PC-3 (cell line): ENCODE measurements at regions of chr10 and their contacts with region 1.

Region 1: DNA sequence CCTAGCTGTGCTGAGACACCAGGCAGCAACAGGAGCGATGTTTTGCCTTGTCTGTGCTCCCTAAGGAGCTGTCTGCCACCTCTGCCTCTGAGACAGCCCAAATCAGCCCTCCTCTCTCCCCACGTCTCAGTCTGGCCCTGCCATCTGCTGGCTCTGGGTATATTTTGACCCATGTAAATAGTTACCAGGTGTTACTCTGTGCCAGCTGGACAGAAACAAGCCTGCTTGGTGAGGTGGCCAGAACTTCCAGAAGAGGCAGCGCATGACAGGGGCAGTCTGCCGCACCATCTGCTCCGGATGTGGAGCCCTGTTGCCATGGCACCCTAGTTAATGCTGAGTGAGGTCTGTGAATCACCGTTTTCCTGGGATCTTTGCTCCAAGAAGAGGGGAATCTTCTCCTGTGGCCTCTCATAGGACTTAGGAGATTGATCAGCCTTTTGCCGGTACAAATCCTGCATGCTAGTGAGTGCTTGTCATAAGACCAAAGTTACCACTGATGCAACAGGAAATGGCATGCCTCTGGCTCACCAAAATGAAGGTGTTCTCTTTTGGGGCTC is 31.8 kb downstream of the GSTO2 start:
- DNase-seq: peak; percentile 79
- ATAC-seq: peak; percentile 82
- H3K4me3 ChIP-seq: no peak overlapping the region
- H3K27ac ChIP-seq: peak overlapping the region; percentile 94
- H3K4me1 ChIP-seq: peaks cover 29% of the 10 kb centered on the region
- H3K27me3 ChIP-seq: no peaks in the 10 kb centered on the region
- CTCF ChIP-seq: peak; percentile 41; the same call in 1 of the 2 replicates

Region 2: DNA sequence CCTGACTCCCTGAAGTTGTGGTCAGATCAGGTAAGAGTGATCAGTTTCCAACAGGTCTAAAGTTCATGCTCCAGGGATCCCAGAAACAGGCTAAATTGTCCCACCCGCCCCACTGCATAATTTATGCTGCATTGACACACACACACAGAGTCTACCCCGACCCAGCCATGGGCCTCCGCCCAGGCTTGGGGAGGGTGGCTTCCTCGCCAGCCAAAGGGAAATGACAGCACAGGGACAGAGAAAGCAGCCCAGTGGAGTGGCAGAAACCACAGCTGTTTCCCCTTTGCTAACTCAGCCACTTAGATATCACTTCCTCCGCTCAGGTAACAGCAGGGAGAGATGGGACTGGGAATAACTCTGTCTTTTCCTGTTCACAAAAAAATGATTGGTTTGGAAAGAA is 454.8 kb before region 1 on chr10:
- CTCF ChIA-PET with region 1: no interaction called
- POLR2A ChIA-PET with region 1: no interaction called
- intact Hi-C with region 1: no loop called
- DNase-seq: no peak
- ATAC-seq: no peak
- H3K4me3 ChIP-seq: no peak overlapping the region
- H3K27ac ChIP-seq: no peak overlapping the region
- H3K4me1 ChIP-seq: peaks cover 24% of the 10 kb centered on the region
- H3K27me3 ChIP-seq: no peaks in the 10 kb centered on the region
- CTCF ChIP-seq: no peak

Region 3: DNA sequence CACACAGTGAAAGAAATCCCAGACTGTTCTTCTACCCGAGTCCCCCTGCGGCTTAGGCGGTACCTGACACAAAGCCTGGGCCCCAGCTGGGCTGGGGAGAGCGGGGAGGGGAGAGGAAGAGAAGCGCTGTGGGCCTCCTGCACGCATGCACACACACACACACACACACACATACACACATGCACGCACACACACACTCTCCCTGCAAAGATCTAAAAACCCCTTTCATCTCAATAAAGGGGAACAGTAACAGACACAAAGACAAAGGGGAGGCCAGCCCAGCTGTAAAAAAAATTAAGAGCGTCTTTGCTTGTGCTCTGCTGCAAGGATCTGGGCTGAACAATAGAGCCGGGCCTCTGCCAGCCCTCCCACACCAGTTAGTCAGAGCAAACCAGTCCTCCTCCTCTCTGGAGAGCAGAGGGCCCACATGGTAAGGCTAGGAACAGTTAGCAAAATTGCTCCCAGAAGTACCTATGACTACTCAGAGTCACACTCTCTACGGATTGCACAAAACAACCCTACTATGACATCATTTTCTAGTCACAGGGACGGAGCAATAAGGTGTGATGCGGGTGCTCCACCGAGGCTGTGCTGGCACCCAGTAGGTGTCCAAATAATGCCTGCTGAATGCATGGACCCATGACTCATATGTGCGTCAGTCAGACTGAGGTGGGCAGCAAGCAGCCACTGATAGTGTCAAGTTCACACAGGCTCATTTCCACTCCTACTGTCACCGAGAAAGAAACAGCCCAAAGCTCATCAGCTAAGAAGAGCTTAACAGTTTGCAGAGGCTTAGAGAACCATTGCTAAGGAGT is 28.3 kb after region 1 on chr10:
- CTCF ChIA-PET with region 1: interaction called, 3 read pairs
- POLR2A ChIA-PET with region 1: no interaction called
- intact Hi-C with region 1: loop called (anchors 2 kb)
- DNase-seq: peak; percentile 90
- ATAC-seq: peak; percentile 55
- H3K4me3 ChIP-seq: peak overlapping the region; percentile 56
- H3K27ac ChIP-seq: peak overlapping the region; percentile 99
- H3K4me1 ChIP-seq: peaks cover 71% of the 10 kb centered on the region
- H3K27me3 ChIP-seq: no peaks in the 10 kb centered on the region
- CTCF ChIP-seq: no peak

Region 4: DNA sequence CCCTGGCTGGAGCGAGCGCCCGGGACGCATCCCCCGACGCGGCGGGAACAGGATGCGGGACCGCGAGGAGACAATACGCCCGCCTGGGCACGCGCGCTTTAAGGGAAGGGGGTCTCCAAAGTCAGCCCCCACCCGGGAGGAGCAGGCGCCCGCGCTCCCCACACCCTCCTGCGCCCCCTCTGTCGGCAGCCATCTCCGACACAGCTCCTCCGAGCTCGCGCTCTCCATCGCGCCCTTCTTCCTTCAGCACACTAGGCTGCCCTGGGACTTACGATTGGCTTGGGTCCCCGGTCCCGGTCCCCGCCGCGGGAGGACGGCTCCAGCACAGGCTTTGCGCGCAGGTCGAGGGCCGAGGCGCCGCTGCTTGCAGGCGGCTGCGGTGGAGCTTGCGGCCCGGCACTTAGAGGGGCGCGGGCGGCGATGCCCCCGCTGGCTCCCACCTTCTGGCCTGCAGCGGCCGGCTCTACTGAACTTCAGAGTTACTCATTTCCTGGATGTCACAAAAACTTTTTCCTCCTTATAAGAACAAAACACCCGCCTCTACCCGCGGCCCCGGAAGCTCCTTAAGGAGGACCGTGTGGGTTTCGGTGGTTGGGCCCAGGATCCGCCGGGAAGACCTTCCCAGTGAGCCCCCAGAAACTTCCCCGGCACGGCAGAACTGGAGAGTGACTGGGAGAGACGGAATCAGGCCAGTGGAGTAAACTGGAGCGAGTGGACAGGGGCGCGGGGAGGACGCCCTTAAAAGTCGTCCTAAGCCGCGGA is 37.3 kb after region 1 on chr10 and contains the start of gene ITPRIP:
- CTCF ChIA-PET with region 1: no interaction called
- POLR2A ChIA-PET with region 1: no interaction called
- intact Hi-C with region 1: loop called (anchors 2 kb)
- DNase-seq: peak; percentile 67
- ATAC-seq: peak; percentile 69
- H3K4me3 ChIP-seq: peak within 1 kb of the TSS; percentile 93
- H3K27ac ChIP-seq: peak within 1 kb of the TSS; percentile 82
- H3K4me1 ChIP-seq: peaks cover 46% of the 10 kb centered on the region
- H3K27me3 ChIP-seq: no peaks in the 10 kb centered on the region
- CTCF ChIP-seq: no peak; the same call in 1 of the 2 replicates
- total RNA-seq, gene ITPRIP: 7.0 and 10.3 TPM in 2 replicates